Activated T-helper 2 cell treated with anti-CD3 and anti-CD28 coated beads, Interferon-gamma antibody, Interleukin-2, Interleukin-4, amounts not matched to agents 10 μg/mL and 5 μg/mL and 100 μg/mL, durations not matched to agents 14 hours and 24 hours and 36 hours (primary cell): ENCODE measurements at regions of chr15 and their contacts with region 1.

Region 1: DNA sequence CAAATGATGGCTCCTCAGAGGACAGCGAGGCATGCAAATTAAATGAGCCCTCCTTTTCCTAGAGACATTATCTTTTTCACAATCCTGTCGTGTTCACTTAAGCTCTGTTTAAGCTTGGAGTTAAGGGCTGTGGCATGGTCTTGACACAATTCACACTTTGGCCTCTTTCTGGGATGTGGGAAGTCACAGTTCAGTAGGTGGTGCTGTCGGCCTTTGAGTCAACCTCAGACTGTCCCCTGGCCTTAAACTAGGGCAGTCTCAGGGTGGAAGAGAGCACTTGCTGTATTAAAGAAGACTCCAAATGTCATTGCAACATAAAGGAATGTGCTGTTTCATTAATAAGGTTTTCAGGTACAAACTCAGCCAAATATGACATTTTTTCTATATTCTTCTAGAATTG is 351.0 kb downstream of the MCTP2 start:
- DNase-seq: no peak
- H3K4me3 Mint-ChIP-seq: no peak overlapping the region
- H3K27ac Mint-ChIP-seq: no peak overlapping the region
- H3K4me1 Mint-ChIP-seq: peaks cover 31% of the 10 kb centered on the region
- H3K27me3 Mint-ChIP-seq: peaks cover 73% of the 10 kb centered on the region

Region 2: DNA sequence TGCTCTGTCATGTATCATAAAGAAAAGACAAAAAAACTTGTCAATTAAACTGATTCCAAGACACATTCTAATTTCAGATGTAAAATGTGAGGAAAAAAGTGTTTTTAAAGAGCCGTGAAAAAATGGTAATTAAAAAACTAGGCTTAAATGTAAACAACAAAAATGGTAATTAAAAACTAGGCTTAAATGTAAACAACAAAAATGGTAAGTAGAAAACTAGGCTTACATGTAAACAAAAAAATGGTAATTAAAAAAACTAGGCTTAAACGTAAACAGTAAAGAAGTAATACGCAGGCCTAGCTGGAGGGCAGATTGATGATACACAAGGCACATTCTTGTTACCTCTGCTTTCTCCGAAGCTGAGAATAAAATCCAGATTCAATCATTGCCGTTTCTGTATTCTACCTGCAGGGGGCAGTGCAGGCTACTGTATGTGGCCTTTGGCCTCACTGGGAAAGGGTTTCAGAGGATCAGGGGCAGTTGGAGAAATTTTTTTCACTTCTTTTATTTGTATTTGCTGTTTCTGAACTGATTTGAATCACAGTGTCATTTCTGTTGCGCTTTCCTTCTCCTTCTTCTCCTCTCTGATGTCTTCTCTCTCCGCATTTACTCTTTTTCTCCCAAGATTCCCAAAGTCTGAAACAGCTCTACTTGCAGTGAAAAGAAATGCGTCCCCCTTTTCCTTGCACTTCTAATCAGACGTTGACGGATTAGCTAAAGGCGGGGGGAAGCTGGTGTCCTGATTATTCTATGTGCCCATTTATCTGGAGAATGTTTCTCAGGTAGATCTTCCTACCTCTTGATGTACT is 418.2 kb before region 1 on chr15:
- intact Hi-C with region 1: loop called (anchors 5 kb)
- DNase-seq: peak; percentile 45
- H3K4me3 Mint-ChIP-seq: no peak overlapping the region
- H3K27ac Mint-ChIP-seq: no peak overlapping the region
- H3K4me1 Mint-ChIP-seq: peaks cover 15% of the 10 kb centered on the region
- H3K27me3 Mint-ChIP-seq: peaks cover 22% of the 10 kb centered on the region

Region 3: DNA sequence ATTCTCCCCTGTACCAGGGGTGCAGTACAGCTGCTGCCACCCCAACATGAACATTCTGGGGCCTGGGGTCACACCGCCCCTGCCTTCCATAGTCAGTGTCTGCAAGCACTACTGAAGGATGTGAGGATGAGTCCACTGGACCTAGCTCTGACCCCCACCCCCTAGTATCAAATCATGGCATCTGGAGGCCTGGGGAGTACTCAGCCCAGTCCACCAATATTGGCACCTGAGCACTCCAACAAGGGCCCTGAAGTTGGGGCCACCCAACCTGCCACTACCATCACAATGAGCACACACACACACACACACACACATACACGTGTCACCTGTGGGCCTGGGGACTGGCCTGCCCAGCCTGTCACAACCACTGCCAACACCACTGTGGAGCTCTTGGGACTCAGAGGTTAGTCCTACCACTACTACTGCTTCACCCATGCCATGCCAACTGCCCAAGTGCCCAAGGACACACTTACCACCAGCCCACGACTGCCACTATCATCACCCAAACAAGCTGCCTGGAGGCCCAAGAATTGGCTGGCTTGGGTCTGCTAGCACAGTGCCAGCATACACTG is 97.1 kb before region 1 on chr15:
- intact Hi-C with region 1: no loop called
- DNase-seq: no peak
- H3K4me3 Mint-ChIP-seq: no peak overlapping the region
- H3K27ac Mint-ChIP-seq: no peak overlapping the region
- H3K4me1 Mint-ChIP-seq: no peaks in the 10 kb centered on the region
- H3K27me3 Mint-ChIP-seq: peaks cover 10% of the 10 kb centered on the region

Region 4: DNA sequence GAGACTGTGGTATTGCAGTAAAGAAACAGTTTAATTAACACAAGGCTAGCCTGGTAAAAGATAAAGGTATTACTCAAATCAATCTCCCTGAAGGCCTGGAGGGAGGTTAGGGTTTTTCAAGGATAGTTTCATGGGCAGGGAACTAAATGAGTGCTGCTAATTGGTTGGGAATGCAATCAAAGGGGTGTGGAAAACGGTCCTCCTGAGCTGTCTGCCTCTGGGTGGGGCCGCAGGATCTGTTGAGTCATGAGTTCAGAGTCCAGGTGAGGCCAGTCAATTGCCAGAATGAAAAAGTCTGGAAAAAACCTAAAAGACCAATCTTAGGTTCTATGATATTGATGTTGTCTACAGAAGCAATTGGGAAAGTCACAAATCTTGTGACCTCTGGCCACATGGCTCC is 57.8 kb before region 1 on chr15:
- intact Hi-C with region 1: no loop called
- DNase-seq: no peak
- H3K4me3 Mint-ChIP-seq: no peak overlapping the region
- H3K27ac Mint-ChIP-seq: no peak overlapping the region
- H3K4me1 Mint-ChIP-seq: no peaks in the 10 kb centered on the region
- H3K27me3 Mint-ChIP-seq: peaks cover 2% of the 10 kb centered on the region

Region 5: GRCh38 chr15:94610069-94610468 is 27.7 kb after region 1 on chr15:
- intact Hi-C with region 1: loop called (anchors 1 kb)
- DNase-seq: no peak
- H3K4me3 Mint-ChIP-seq: no peak overlapping the region
- H3K27ac Mint-ChIP-seq: no peak overlapping the region
- H3K4me1 Mint-ChIP-seq: peaks cover 23% of the 10 kb centered on the region
- H3K27me3 Mint-ChIP-seq: peaks cover 67% of the 10 kb centered on the region

Region 6: GRCh38 chr15:94670438-94671034 is 88.2 kb after region 1 on chr15:
- intact Hi-C with region 1: loop called (anchors 1 kb)
- DNase-seq: no peak
- H3K4me3 Mint-ChIP-seq: no peak overlapping the region
- H3K27ac Mint-ChIP-seq: no peak overlapping the region
- H3K4me1 Mint-ChIP-seq: no peaks in the 10 kb centered on the region
- H3K27me3 Mint-ChIP-seq: peaks cover 14% of the 10 kb centered on the region

Region 7: DNA sequence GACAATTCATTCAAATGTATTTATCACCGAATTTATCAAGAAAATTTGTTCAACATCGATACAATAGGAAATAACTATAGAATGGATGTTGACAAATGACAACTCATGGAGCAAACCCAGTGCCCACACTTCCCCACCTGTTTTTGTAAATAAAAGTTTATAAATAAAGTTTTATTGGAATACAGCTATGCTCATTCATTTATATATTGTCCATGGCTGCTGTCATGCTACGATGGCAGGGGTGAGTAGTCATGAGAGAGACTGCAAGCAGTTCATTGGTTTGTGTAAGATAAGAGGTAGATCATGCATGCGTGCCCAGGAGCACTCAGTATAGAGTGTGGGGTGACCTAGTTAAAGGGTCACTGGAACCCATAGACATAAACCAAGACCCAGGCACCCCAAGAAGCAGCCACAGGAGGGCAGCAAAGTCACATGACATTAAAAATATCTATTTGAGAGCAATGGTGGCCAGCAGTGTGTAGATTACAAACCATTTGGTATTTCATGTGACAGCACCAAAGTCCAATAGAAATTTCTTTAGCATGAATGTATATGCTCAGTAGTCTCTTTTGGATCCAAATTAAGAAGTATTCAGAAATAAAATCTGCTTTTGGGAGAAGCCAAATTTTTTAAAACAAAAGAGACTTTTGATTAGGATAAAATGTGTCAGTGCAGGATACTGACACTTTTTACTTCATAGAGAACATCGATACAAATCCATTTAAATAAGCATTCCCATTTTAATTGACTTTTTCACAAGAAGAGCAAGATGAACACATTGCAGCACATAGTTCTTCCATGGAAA is 443.8 kb after region 1 on chr15:
- intact Hi-C with region 1: loop called (anchors 10 kb)
- DNase-seq: no peak
- H3K4me3 Mint-ChIP-seq: no peak overlapping the region
- H3K27ac Mint-ChIP-seq: no peak overlapping the region
- H3K4me1 Mint-ChIP-seq: no peaks in the 10 kb centered on the region
- H3K27me3 Mint-ChIP-seq: no peaks in the 10 kb centered on the region

Region 8: DNA sequence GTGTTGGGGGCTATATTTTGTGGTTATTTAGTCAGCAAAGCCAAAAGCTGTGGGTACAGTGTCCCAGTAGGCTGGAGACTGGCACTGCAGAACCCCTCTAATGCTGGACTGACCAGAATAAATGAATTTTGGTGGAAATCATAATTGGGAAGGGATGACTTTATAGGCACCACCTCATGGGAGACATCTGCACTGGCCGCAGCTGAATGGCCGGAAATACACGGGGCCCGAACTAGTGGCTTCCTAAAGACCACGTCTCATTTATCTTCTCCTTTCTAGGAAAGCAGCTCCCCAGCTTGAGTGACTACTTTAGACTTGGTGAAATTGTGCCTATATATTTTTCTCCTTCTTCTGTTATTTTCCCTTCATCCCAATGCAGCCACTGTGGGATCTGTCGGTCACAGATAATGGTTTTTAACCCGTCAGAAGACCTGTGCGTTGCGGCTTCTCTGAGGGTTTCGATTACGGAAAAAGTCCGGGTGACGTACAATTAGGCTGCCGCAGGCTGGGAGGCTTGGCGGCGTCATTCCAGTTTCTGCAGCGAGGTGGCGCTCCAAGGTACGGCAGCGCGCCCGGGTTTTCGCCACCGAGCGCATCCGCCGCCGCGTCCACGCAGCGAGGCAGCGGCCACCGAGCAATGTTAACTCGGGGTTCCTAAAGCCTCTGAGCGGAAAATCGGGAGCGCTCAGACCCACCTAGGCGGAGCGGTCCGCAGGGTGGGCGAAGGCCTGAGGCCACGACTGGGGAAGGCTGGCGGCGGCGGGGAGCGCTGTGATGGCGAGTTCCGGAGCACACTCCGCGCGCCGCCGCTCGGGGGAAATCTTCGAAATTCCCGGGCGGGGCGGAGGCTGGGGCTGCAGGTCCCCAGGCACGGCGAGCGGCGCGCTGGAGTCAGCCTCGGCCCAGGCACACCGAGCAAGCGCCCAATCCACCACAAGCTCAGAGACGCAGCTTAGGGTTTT is 1774.4 kb after region 1 on chr15:
- intact Hi-C with region 1: loop called (anchors 10 kb)
- DNase-seq: peak; percentile 74
- H3K4me3 Mint-ChIP-seq: peak overlapping the region; percentile 79
- H3K27ac Mint-ChIP-seq: no peak overlapping the region
- H3K4me1 Mint-ChIP-seq: peaks cover 16% of the 10 kb centered on the region
- H3K27me3 Mint-ChIP-seq: peaks cover 67% of the 10 kb centered on the region